Endothelial cell of umbilical vein (primary cell): ENCODE measurements at regions of chr17 and their contacts with region 1.

Region 1: DNA sequence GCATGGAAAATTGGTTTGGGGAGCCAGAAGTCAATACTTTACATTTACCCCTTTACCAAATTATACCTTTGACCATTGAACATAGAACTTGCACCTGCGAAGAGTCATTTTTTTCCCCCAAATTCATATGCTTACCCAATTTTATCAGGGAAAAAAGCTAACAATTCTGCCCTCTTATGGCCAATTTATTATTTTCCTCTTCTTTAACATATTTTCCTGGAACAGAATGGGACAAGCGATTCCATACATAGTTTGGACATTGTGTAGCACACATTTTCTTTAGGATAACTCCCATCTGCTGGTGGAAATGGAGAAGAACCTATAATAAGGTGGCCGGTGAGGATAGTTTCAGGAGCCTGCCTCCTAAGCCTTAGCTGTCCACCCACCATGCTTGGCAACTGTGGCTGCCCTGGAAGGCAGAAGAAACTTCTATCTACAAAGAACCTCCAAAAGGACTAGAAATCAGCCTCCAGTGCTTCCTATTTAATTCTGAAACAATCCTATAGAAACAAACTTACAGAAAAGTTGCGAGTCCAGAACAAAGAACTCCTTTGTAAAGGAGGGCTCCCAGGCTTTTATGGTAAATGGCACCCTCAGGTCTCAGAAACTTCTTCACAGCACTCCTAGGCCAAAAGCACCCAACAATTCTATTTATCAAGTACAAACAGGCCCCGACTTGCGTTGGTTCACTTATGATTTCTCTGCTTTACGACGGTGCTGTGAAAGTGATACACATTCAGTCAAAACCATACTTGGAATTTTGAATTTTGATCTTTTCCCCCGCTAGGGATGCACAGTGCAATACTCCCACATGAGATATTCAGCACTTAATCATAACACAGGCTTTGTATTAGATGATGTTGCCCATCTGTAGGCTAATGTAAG is 64.1 kb upstream of the CACNG4 start:
- DNase-seq: peak; percentile 6
- H3K4me3 ChIP-seq: no peak overlapping the region
- H3K27ac ChIP-seq: no peak overlapping the region
- H3K4me1 ChIP-seq: peaks cover 6% of the 10 kb centered on the region
- H3K27me3 ChIP-seq: peaks cover 2 to 3% of the 10 kb centered on the region in 2 experiments
- CTCF ChIP-seq: no peak
- POLR2A ChIP-seq: no peak

Region 2: GRCh38 chr17:66549731-66550207 is 350.6 kb before region 1 on chr17:
- CTCF ChIA-PET with region 1: no interaction called
- POLR2A ChIA-PET with region 1: no interaction called
- dilution Hi-C with region 1: no loop called
- intact Hi-C with region 1: no loop called
- DNase-seq: peak; percentile 46
- H3K4me3 ChIP-seq: no peak overlapping the region
- H3K27ac ChIP-seq: peak overlapping the region; percentile 33
- H3K4me1 ChIP-seq: peaks cover 39% of the 10 kb centered on the region
- H3K27me3 ChIP-seq: no peaks in the 10 kb centered on the region
- CTCF ChIP-seq: no peak
- POLR2A ChIP-seq: no peak

Region 3: GRCh38 chr17:66715745-66716156 is 184.6 kb before region 1 on chr17:
- CTCF ChIA-PET with region 1: interaction called, 24 read pairs
- POLR2A ChIA-PET with region 1: no interaction called
- dilution Hi-C with region 1: no loop called
- intact Hi-C with region 1: no loop called
- DNase-seq: peak; percentile 70
- H3K4me3 ChIP-seq: no peak overlapping the region
- H3K27ac ChIP-seq: no peak overlapping the region
- H3K4me1 ChIP-seq: no peaks in the 10 kb centered on the region
- H3K27me3 ChIP-seq: no peaks in the 10 kb centered on the region
- CTCF ChIP-seq: peak; percentile 58 to 69
- POLR2A ChIP-seq: no peak

Region 4: DNA sequence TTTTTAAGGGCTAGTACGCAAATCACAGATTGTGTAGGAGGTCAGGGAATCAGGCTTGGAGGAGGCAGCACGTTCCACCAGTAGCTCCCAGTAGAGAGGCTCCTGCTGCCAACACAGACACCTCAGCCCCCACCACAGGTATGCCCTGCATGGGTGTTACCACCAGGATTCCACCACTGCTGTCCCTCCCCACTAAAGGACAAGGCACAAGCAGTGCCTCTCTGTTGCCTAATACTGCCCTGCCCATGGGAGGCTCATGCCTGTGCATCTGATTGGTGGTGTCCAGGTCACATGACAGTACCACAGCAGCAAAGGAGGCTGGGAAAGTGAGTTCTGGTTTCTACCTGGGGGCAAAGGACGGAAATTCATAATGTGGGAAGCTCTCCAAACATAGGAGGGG is 30.6 kb after region 1 on chr17:
- CTCF ChIA-PET with region 1: no interaction called
- POLR2A ChIA-PET with region 1: no interaction called
- dilution Hi-C with region 1: no loop called
- intact Hi-C with region 1: no loop called
- DNase-seq: no peak
- H3K4me3 ChIP-seq: no peak overlapping the region
- H3K27ac ChIP-seq: no peak overlapping the region
- H3K4me1 ChIP-seq: no peaks in the 10 kb centered on the region
- H3K27me3 ChIP-seq: peaks cover 2 to 9% of the 10 kb centered on the region in 2 experiments
- CTCF ChIP-seq: no peak
- POLR2A ChIP-seq: no peak